Esophagus muscularis mucosa (tissue), 4 donors: ENCODE measurements at regions of chr11 and their contacts with region 1.

Region 1: GRCh38 chr11:10933455-10934292 is 75.8 kb upstream of the ZBED5 start:
- DNase-seq: peak; percentile 97
- H3K4me3 ChIP-seq: peak overlapping the region; percentile 53 to 60 (median 54)
- H3K27ac ChIP-seq: peak overlapping the region; percentile 81 to 97 (median 84)
- H3K4me1 ChIP-seq: peaks cover 5 to 41% (median 32%) of the 10 kb centered on the region in 4 donors
- H3K27me3 ChIP-seq: no peaks in the 10 kb centered on the region
- CTCF ChIP-seq: peak in 2 of 3 experiments; percentile 97 to 99
- EP300 ChIP-seq: no peak
- POLR2A ChIP-seq: no peak

Region 2: GRCh38 chr11:10792398-10792975 is 141.2 kb before region 1 on chr11:
- intact Hi-C with region 1: loop called (anchors 5 kb)
- DNase-seq: peak; percentile 95
- H3K4me3 ChIP-seq: peak overlapping the region; percentile 6 to 42 (median 16)
- H3K27ac ChIP-seq: no peak overlapping the region
- H3K4me1 ChIP-seq: peaks cover 7 to 9% (median 9%) of the 10 kb centered on the region in 4 donors
- H3K27me3 ChIP-seq: no peaks in the 10 kb centered on the region
- CTCF ChIP-seq: peak; percentile 88 to 96 (median 92)
- EP300 ChIP-seq: no peak
- POLR2A ChIP-seq: no peak

Region 3: GRCh38 chr11:10808553-10809372 is 124.9 kb before region 1 on chr11 and contains the start of gene EIF4G2:
- intact Hi-C with region 1: loop called (anchors 2 kb)
- DNase-seq: peak; percentile 99
- H3K4me3 ChIP-seq: peak within 1 kb of the TSS; percentile 61 to 96 (median 94)
- H3K27ac ChIP-seq: peak within 1 kb of the TSS; percentile 88 to 99 (median 99)
- H3K4me1 ChIP-seq: peaks cover 38 to 45% (median 43%) of the 10 kb centered on the region in 4 donors
- H3K27me3 ChIP-seq: no peaks in the 10 kb centered on the region
- CTCF ChIP-seq: no peak
- EP300 ChIP-seq: no peak
- POLR2A ChIP-seq: peak; percentile 98
- total RNA-seq, gene EIF4G2: 508 to 734 (median 592) TPM

Region 4: GRCh38 chr11:10864688-10865087 is 69.0 kb before region 1 on chr11:
- intact Hi-C with region 1: loop called (anchors 5 kb)
- DNase-seq: no peak
- H3K4me3 ChIP-seq: no peak overlapping the region
- H3K27ac ChIP-seq: peak overlapping the region; percentile 55 to 95 (median 92)
- H3K4me1 ChIP-seq: peaks cover 11 to 59% (median 45%) of the 10 kb centered on the region in 4 donors
- H3K27me3 ChIP-seq: no peaks in the 10 kb centered on the region
- CTCF ChIP-seq: no peak
- EP300 ChIP-seq: no peak
- POLR2A ChIP-seq: no peak

Region 5: GRCh38 chr11:11022125-11022730 is 88.6 kb after region 1 on chr11:
- intact Hi-C with region 1: loop called (anchors 1 kb)
- DNase-seq: no peak
- H3K4me3 ChIP-seq: no peak overlapping the region
- H3K27ac ChIP-seq: no peak overlapping the region
- H3K4me1 ChIP-seq: peaks cover 0 to 1% (median 0%) of the 10 kb centered on the region in 4 donors
- H3K27me3 ChIP-seq: no peaks in the 10 kb centered on the region
- CTCF ChIP-seq: peak; percentile 50 to 53 (median 50)
- EP300 ChIP-seq: no peak
- POLR2A ChIP-seq: no peak

Region 6: GRCh38 chr11:11265994-11266606 is 332.4 kb after region 1 on chr11:
- intact Hi-C with region 1: loop called (anchors 10 kb)
- DNase-seq: no peak
- H3K4me3 ChIP-seq: no peak overlapping the region
- H3K27ac ChIP-seq: no peak overlapping the region
- H3K4me1 ChIP-seq: peaks cover 6 to 37% (median 22%) of the 10 kb centered on the region in 4 donors
- H3K27me3 ChIP-seq: no peaks in the 10 kb centered on the region
- CTCF ChIP-seq: peak; percentile 62 to 89 (median 79)
- EP300 ChIP-seq: no peak
- POLR2A ChIP-seq: no peak

Region 7: DNA sequence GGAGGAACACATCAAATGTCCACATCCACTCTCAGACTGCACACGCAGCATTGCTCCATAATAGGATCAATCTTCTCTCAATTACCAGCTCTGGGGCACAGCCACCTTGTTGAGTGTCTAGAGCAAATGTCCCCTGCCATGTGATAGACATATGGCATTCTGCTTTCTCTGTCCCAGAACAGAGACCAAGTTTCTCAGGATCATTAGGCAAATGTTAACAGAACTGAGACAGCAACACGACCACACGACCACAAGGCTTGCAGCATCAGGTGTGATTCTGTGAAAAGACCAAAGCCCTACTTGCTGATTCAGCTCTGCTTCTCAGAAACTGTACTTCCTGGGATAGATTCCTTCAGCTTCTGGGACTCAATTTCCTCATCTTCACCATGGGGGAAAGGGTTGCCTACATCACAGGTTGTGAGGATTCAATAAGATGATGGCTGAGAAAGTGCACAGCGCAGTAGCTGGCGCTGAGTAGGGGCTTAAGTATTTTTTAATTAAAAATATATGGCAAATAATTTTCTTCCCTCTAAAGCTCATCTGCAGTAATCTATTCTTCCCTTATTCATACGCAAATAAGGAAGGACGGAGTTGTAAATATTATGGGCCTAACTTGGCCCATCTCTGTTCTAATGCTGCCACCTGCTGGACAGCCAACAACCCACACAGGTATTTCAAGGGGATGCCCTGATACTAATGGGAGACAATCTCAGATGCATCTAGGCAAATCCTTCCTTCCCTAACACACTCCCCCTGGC is 853.8 kb after region 1 on chr11:
- intact Hi-C with region 1: loop called (anchors 5 kb)
- DNase-seq: peak; percentile 57
- H3K4me3 ChIP-seq: no peak overlapping the region
- H3K27ac ChIP-seq: no peak overlapping the region
- H3K4me1 ChIP-seq: peaks cover 0 to 17% (median 3%) of the 10 kb centered on the region in 4 donors
- H3K27me3 ChIP-seq: no peaks in the 10 kb centered on the region
- CTCF ChIP-seq: peak; percentile 85 to 95 (median 94)
- EP300 ChIP-seq: no peak
- POLR2A ChIP-seq: no peak